Activated CD8-positive, alpha-beta T cell treated with anti-CD3 and anti-CD28 coated beads for 36 hours (primary cell): ENCODE measurements at regions of chr6 and their contacts with region 1.

Region 1: DNA sequence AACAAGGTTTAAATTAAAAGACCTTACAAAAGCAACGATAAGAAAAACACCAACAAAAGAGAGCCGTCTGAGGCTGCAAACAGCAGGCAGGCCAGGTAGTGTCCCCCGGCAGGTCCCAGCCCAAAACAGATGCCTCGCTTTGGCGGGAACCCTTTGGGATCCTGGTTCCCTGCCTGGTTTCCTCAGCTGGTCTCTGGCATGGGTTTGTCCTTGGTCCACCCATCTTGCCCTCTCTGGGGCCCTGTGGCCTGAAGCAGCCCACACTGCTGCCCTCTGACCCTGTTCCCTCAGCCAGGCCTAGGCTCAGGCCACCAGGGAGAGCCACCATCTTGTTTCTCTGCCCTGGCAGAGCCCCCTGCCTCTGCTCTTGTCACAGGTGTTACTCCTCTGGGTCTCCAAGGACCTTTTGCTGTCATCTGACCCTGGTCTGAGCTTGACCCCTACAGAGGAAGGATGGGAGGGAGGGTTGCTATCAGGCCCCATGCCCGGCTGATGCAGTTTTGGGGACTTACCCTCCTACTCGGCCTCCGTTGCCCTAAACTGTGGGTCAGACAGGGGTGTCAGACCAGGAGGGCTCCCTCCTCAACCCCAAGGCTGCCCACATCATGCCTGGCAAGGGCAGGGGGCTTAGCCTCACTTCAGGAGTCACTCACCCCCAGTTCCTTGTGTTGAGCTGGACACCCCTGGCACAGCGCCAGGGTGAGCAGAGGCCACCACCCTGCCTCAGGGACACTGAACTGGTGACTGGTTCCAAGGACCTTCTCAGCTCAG is 30.6 kb upstream of the GRM4 start:
- DNase-seq: no peak
- ATAC-seq: no peak
- H3K4me3 Mint-ChIP-seq: no peak overlapping the region
- H3K27ac Mint-ChIP-seq: no peak overlapping the region
- H3K4me1 Mint-ChIP-seq: peaks cover 9% of the 10 kb centered on the region
- H3K27me3 Mint-ChIP-seq: no peaks in the 10 kb centered on the region
- CTCF ChIP-seq: no peak

Region 2: GRCh38 chr6:34027445-34027936 is 149.0 kb before region 1 on chr6:
- CTCF ChIA-PET with region 1: no interaction called
- POLR2A ChIA-PET with region 1: no interaction called
- intact Hi-C with region 1: no loop called
- DNase-seq: peak; percentile 71
- ATAC-seq: peak; percentile 68
- H3K4me3 Mint-ChIP-seq: no peak overlapping the region
- H3K27ac Mint-ChIP-seq: no peak overlapping the region
- H3K4me1 Mint-ChIP-seq: no peaks in the 10 kb centered on the region
- H3K27me3 Mint-ChIP-seq: no peaks in the 10 kb centered on the region
- CTCF ChIP-seq: peak; percentile 96

Region 3: DNA sequence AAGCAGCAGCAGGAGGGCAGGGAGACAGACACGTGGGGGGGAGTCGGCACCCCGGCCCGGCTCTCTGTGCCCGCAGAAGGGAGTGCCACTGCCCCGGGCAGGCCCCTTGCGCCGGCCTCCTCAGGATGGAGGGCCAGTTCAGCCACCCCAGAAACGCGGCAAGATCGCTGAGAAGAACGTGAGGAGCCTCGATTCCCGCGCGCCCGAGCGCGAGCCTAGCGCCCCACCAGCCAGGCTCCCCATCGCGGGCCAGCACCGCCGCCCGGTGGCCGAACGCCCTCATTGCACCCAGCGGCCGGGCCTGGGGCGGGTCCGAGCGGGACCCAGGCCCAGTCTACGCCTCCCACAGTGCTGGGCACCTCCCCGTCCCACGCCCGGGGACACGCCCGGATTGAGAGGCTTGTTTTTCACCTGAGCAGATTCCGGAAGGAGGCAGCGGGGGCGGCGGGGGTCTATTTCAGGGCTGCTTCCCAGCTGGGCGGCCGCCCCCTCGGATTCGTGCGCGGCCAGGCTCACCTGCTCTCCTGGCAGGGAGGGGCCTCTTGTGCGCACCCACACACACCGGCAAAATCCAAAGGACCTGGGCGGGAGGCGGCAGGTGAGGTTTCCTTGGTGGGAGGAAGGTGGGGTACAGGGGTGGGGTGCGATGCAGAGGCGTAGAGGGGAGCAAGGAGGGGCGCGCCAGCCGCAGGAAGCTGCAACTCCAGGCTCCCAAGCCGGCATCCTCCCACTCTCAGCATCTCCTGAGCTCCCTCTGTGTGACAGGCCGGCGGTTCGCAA is 21.6 kb before region 1 on chr6:
- CTCF ChIA-PET with region 1: interaction called, 13 read pairs
- POLR2A ChIA-PET with region 1: no interaction called
- intact Hi-C with region 1: no loop called
- DNase-seq: peak; percentile 72
- ATAC-seq: peak; percentile 96
- H3K4me3 Mint-ChIP-seq: no peak overlapping the region
- H3K27ac Mint-ChIP-seq: no peak overlapping the region
- H3K4me1 Mint-ChIP-seq: peaks cover 4% of the 10 kb centered on the region
- H3K27me3 Mint-ChIP-seq: peaks cover 31% of the 10 kb centered on the region
- CTCF ChIP-seq: peak; percentile 100